ENCODE measurements at regions of chr2 and their contacts with region 1.

Region 1: GRCh38 chr2:136423516-136423996 is 305.6 kb upstream of the CXCR4 start:
- DNase-seq: peak; percentile 49 to 85 (median 66)
- ATAC-seq: peak; percentile 80 to 99 (median 94)
- H3K4me3 ChIP-seq: peak overlapping the region in 11 of 12 donors; percentile 1 to 58 (median 42)
- H3K27ac ChIP-seq: no peak overlapping the region
- H3K4me1 ChIP-seq: peaks cover 0 to 11% (median 0%) of the 10 kb centered on the region in 12 donors
- H3K27me3 ChIP-seq: peaks cover 0 to 34% (median 6%) of the 10 kb centered on the region in 9 donors
- CTCF ChIP-seq: peak; percentile 69 to 92 (median 87)
- POLR2A ChIP-seq: no peak

Region 2: GRCh38 chr2:136653861-136654260 is 230.3 kb after region 1 on chr2:
- intact Hi-C with region 1: loop called in 2 of 10 experiments (anchors 5 to 10 kb)
- DNase-seq: peak in 4 of 5 donors; percentile 29 to 61 (median 38)
- ATAC-seq: peak; percentile 83 to 96 (median 90)
- H3K4me3 ChIP-seq: no peak overlapping the region
- H3K27ac ChIP-seq: peak overlapping the region in 4 of 12 donors; percentile 40 to 63 (median 47)
- H3K4me1 ChIP-seq: peaks cover 0 to 36% (median 7%) of the 10 kb centered on the region in 12 donors
- H3K27me3 ChIP-seq: no peaks in the 10 kb centered on the region
- CTCF ChIP-seq: peak in 1 of 12 donors; percentile 10
- POLR2A ChIP-seq: no peak

Region 3: GRCh38 chr2:136665736-136666135 is 242.2 kb after region 1 on chr2:
- intact Hi-C with region 1: loop called in 2 of 10 experiments (anchors 5 to 10 kb)
- DNase-seq: no peak
- ATAC-seq: no peak
- H3K4me3 ChIP-seq: no peak overlapping the region
- H3K27ac ChIP-seq: no peak overlapping the region
- H3K4me1 ChIP-seq: no peaks in the 10 kb centered on the region
- H3K27me3 ChIP-seq: peaks cover 0 to 2% (median 0%) of the 10 kb centered on the region in 9 donors
- CTCF ChIP-seq: no peak
- POLR2A ChIP-seq: no peak

Region 4: DNA sequence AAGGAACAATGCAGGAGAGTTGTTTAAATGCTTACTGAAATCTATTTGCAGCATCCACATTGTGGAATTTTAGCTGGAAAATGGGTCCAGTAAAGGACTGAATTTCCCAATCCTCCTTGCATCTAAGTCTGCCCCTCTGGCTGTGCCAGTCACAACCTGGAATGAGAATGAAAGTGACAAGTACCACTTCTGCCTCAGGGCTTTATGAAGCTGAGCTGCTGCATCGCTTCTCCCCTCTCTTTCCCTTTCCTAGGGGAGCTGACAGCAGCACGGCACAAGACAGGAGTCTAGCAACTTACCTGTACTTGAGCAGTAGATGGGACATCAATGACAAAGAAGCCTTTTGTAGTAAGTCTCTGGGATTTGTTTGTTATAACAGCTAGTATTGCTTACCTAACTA is 314.5 kb after region 1 on chr2:
- intact Hi-C with region 1: loop called in 7 of 10 experiments (anchors 2 to 10 kb)
- DNase-seq: no peak
- ATAC-seq: no peak
- H3K4me3 ChIP-seq: no peak overlapping the region
- H3K27ac ChIP-seq: no peak overlapping the region
- H3K4me1 ChIP-seq: no peaks in the 10 kb centered on the region
- H3K27me3 ChIP-seq: peaks cover 0 to 4% (median 0%) of the 10 kb centered on the region in 9 donors
- CTCF ChIP-seq: no peak
- POLR2A ChIP-seq: no peak

Region 5: GRCh38 chr2:136750065-136750464 is 326.5 kb after region 1 on chr2:
- intact Hi-C with region 1: loop called in 2 of 10 experiments (anchors 10 kb)
- DNase-seq: peak in 2 of 5 donors; percentile 62 to 77
- ATAC-seq: peak; percentile 94 to 99 (median 96)
- H3K4me3 ChIP-seq: no peak overlapping the region
- H3K27ac ChIP-seq: peak overlapping the region in 9 of 12 donors; percentile 6 to 69 (median 28)
- H3K4me1 ChIP-seq: no peaks in the 10 kb centered on the region
- H3K27me3 ChIP-seq: no peaks in the 10 kb centered on the region
- CTCF ChIP-seq: no peak
- POLR2A ChIP-seq: no peak

Region 6: DNA sequence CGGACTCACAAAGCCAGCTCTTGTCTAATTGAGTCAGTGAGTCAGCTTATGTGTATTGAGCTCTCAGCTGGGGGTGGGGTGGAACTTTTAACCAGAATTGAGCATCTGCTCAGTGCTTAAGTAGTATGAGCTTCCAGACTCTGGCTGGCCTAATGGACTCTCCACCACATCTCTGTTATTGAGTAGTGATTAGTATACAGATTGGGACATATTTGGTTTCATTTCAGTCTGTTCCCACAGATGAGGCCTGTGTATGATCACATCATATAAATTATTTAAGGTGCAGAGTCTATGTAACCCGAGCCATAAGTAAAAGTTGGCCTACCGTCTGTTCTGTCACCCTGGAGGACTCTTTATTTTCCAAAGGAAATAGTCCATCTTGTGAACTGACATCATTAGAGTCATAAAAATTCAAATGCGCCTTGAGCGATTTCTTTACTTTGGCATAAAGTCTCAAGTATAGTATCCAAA is 493.9 kb after region 1 on chr2:
- intact Hi-C with region 1: loop called in 1 of 10 experiments (anchors 5 kb)
- DNase-seq: no peak
- ATAC-seq: no peak
- H3K4me3 ChIP-seq: no peak overlapping the region
- H3K27ac ChIP-seq: no peak overlapping the region
- H3K4me1 ChIP-seq: no peaks in the 10 kb centered on the region
- H3K27me3 ChIP-seq: no peaks in the 10 kb centered on the region
- CTCF ChIP-seq: no peak
- POLR2A ChIP-seq: no peak

Region 7: GRCh38 chr2:137838255-137839092 is 1414.9 kb after region 1 on chr2:
- intact Hi-C with region 1: loop called in 9 of 10 experiments (anchors 2 to 10 kb)
- DNase-seq: no peak
- ATAC-seq: no peak
- H3K4me3 ChIP-seq: no peak overlapping the region
- H3K27ac ChIP-seq: no peak overlapping the region
- H3K4me1 ChIP-seq: no peaks in the 10 kb centered on the region
- H3K27me3 ChIP-seq: peaks cover 0 to 3% (median 0%) of the 10 kb centered on the region in 9 donors
- CTCF ChIP-seq: peak; percentile 54 to 80 (median 68)
- POLR2A ChIP-seq: no peak